ENCODE measurements at regions of chr1 and their contacts with region 1.

Region 1: DNA sequence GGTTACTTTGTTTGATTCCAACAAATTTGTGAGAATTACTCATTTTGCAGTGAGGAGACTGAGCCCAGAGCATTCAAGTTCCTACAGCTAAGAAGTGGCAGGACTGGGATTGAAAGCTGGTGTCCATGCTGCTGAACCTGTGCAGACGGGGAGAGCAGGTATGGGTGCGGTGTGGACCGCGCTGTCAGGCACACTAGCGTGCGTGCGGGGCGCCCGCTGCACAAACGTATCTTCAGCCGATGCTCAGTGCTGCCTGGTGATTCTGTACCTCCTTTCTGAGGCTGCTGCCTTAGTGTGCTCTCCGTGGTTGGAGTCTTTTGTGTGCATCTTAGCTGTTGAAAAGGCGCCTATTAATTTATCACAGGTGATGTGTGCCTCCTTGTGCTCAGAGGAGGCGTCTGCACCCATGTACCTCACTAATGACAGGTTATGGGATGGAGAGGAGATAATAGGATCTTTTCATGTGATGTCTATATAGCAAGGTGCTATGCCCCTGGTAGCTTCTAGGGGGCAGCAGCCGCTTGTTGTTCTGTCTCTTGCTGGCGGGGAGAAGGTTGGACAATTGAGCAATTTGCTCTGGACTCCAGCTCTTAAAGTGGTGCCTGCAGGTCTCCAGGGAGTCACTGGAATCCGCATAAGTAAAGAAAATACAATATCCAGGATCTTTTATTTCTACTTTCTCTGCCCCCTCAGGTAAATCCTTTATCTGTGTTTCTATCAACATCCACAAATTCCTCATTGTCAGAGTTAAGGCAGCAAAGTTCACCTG is 32.5 kb downstream of the PEX14 start:
- DNase-seq: peak; percentile 67
- H3K4me3 Mint-ChIP-seq: no peak overlapping the region
- H3K27ac Mint-ChIP-seq: no peak overlapping the region
- H3K4me1 Mint-ChIP-seq: peaks cover 39% of the 10 kb centered on the region
- H3K27me3 Mint-ChIP-seq: no peaks in the 10 kb centered on the region

Region 2: GRCh38 chr1:10209905-10210810 is 297.1 kb before region 1 on chr1 and contains the start of gene KIF1B:
- CTCF ChIA-PET with region 1: interaction called, 3 read pairs
- POLR2A ChIA-PET with region 1: no interaction called
- intact Hi-C with region 1: loop called (anchors 10 kb)
- DNase-seq: peak; percentile 97
- H3K4me3 Mint-ChIP-seq: peak within 1 kb of the TSS; percentile 82
- H3K27ac Mint-ChIP-seq: peak within 1 kb of the TSS; percentile 60
- H3K4me1 Mint-ChIP-seq: peaks cover 33% of the 10 kb centered on the region
- H3K27me3 Mint-ChIP-seq: no peaks in the 10 kb centered on the region
- total RNA-seq, gene KIF1B: 16.8 to 17.4 TPM

Region 3: GRCh38 chr1:10494754-10495474 is 12.4 kb before region 1 on chr1:
- CTCF ChIA-PET with region 1: interaction called, 159 read pairs
- POLR2A ChIA-PET with region 1: interaction called, 8 read pairs
- intact Hi-C with region 1: loop called (anchors 1 kb)
- DNase-seq: peak; percentile 89
- H3K4me3 Mint-ChIP-seq: peak overlapping the region; percentile 63
- H3K27ac Mint-ChIP-seq: peak overlapping the region; percentile 79
- H3K4me1 Mint-ChIP-seq: peaks cover 41% of the 10 kb centered on the region
- H3K27me3 Mint-ChIP-seq: no peaks in the 10 kb centered on the region

Region 4: DNA sequence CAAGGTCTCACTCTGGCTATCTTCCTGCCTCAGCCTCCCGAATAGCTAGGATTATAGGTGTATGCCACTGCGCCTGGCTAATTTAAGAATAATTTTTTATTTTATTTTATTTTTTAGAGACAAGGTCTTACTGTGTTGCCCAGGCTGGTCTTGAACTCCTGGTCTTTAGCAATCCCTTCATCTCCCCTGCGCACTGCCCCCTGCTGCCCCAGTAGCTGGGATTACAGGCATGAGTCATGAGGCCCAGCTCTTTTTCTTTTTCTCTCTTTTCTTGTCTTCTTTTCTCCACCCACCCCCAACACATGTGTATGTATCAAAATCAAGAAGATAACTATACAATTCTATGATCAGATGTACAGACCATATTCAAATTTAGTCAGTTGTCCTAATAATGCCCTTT is 54.7 kb after region 1 on chr1:
- CTCF ChIA-PET with region 1: interaction called, 10 read pairs
- POLR2A ChIA-PET with region 1: no interaction called
- intact Hi-C with region 1: no loop called
- DNase-seq: peak; percentile 36
- H3K4me3 Mint-ChIP-seq: no peak overlapping the region
- H3K27ac Mint-ChIP-seq: no peak overlapping the region
- H3K4me1 Mint-ChIP-seq: peaks cover 5% of the 10 kb centered on the region
- H3K27me3 Mint-ChIP-seq: no peaks in the 10 kb centered on the region

Region 5: DNA sequence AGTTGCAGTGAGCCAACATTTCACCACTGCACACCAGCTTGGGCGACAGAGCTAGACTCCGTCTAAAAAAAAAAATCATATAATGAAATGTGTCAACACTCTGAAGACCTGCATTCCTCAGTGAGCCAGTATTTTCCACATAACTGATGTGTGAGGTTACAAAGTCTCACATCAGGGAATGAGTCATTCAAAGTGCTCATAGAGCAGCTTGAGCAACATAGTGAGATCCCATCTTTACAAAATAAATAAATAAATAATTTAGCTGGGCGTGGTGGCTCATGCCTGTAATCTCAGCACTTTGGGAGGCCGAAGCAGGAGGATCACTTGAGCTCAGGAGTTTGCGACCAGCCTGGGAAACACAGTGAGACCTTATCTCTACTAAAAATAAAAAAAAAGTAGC is 223.7 kb after region 1 on chr1:
- CTCF ChIA-PET with region 1: no interaction called
- POLR2A ChIA-PET with region 1: no interaction called
- intact Hi-C with region 1: loop called (anchors 1 kb)
- DNase-seq: peak; percentile 13
- H3K4me3 Mint-ChIP-seq: no peak overlapping the region
- H3K27ac Mint-ChIP-seq: no peak overlapping the region
- H3K4me1 Mint-ChIP-seq: peaks cover 13% of the 10 kb centered on the region
- H3K27me3 Mint-ChIP-seq: peaks cover 6% of the 10 kb centered on the region

Region 6: DNA sequence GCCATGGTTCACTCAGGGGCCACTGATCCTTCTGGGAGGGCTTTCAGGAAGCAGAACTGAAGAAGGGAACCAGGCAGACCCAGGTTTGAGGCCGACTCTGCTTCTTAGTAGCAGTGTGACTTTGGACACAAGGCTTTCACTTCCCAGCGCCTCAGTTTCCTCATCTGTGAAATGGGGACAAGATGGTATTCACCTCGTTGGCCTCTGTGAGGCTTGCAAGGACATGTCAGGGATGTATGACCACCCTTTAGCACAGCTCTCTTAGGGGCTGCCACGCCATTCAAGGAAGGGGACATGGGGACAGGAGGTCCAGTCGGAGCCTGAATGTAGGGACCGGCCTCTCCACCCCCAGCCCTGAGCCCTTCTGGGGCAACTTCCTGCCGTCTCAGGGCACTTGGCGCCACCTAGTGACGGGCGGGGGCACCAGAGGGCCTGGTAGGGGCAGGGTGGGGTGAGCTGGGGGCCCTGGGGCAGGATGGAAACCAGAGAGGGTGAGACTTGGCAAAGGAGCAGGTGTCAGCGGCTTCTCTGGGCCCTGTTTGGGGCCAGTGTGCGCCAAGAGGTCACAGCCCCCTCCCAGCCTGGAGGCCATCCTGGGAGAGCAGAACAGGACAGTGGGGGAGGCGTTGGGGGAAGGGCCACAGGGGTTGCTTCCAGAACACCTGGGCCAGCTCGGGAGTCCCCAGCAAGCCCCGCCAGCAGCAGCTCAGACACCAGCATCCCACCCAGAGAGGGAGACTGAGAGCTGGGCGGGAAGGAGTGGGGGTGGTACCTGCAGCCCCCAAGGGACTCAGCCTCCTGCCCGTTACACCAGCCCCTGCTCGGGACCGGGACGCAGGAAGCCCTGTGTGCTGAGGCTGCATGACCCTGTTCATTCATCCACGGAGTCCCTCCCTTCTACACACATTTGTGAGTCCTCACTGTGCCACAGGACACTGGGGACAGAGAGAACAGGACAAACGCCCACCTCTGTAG is 402.7 kb after region 1 on chr1:
- CTCF ChIA-PET with region 1: interaction called, 22 read pairs
- POLR2A ChIA-PET with region 1: no interaction called
- intact Hi-C with region 1: no loop called
- DNase-seq: peak; percentile 79
- H3K4me3 Mint-ChIP-seq: no peak overlapping the region
- H3K27ac Mint-ChIP-seq: no peak overlapping the region
- H3K4me1 Mint-ChIP-seq: peaks cover 1% of the 10 kb centered on the region
- H3K27me3 Mint-ChIP-seq: peaks cover 2% of the 10 kb centered on the region

Region 7: GRCh38 chr1:10941891-10942541 is 434.7 kb after region 1 on chr1:
- CTCF ChIA-PET with region 1: interaction called, 11 read pairs
- POLR2A ChIA-PET with region 1: interaction called, 3 read pairs
- intact Hi-C with region 1: loop called (anchors 2 kb)
- DNase-seq: peak; percentile 70
- H3K4me3 Mint-ChIP-seq: no peak overlapping the region
- H3K27ac Mint-ChIP-seq: no peak overlapping the region
- H3K4me1 Mint-ChIP-seq: peaks cover 26% of the 10 kb centered on the region
- H3K27me3 Mint-ChIP-seq: peaks cover 39% of the 10 kb centered on the region

Measured in activated CD4-positive, alpha-beta memory T cell treated with anti-CD3 and anti-CD28 coated beads for 36 hours (primary cell).